Heart left ventricle (tissue), 16 donors: ENCODE measurements at regions of chr21 and their contacts with region 1.

Region 1: DNA sequence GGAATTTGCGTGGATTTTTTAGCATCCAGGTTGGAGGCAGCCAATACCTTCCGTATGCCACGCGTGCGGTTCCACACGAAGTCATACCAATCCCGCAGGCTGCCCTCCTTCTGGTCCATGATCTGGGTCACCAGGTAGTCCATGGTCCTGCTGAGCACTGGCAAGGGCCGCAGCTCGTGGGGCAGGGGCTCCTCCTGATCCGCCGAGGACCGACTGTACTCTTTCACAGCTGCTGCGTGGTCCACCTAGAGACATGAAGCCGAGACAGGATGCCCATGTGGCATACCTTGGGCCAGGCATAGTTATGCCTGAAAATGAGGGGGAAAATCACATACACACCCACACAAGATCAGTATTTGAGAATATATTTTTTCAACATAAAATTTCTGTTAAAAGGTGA is 12.1 kb downstream of the MCM3AP start:
- DNase-seq: no peak
- ATAC-seq: no peak
- H3K4me3 ChIP-seq: no peak overlapping the region
- H3K27ac ChIP-seq: no peak overlapping the region
- H3K4me1 ChIP-seq: no peaks in the 10 kb centered on the region
- H3K27me3 ChIP-seq: no peaks in the 10 kb centered on the region
- CTCF ChIP-seq: no peak
- POLR2A ChIP-seq: no peak

Region 2: GRCh38 chr21:46082900-46083790 is 190.2 kb before region 1 on chr21:
- intact Hi-C with region 1: no loop called
- DNase-seq: peak in 2 of 5 donors; percentile 14 to 55
- ATAC-seq: no peak
- H3K4me3 ChIP-seq: no peak overlapping the region
- H3K27ac ChIP-seq: peak overlapping the region in 1 of 12 donors; percentile 37
- H3K4me1 ChIP-seq: peaks cover 3 to 28% (median 20%) of the 10 kb centered on the region in 12 donors
- H3K27me3 ChIP-seq: no peaks in the 10 kb centered on the region
- CTCF ChIP-seq: no peak
- POLR2A ChIP-seq: no peak

Region 3: GRCh38 chr21:46411236-46411635 is 137.9 kb after region 1 on chr21:
- intact Hi-C with region 1: loop called in 1 of 10 experiments (anchors 10 kb)
- DNase-seq: peak in 1 of 5 donors; percentile 61
- ATAC-seq: peak in 2 of 4 donors; percentile 9 to 24
- H3K4me3 ChIP-seq: no peak overlapping the region
- H3K27ac ChIP-seq: no peak overlapping the region
- H3K4me1 ChIP-seq: no peaks in the 10 kb centered on the region
- H3K27me3 ChIP-seq: no peaks in the 10 kb centered on the region
- CTCF ChIP-seq: no peak
- POLR2A ChIP-seq: no peak